Activated naive CD4-positive, alpha-beta T cell treated with anti-CD3 and anti-CD28 coated beads for 36 hours (primary cell): ENCODE measurements at regions of chr17 and their contacts with region 1.

Region 1: GRCh38 chr17:49788478-49789242 is at the start of gene KAT7:
- DNase-seq: peak; percentile 99
- H3K4me3 Mint-ChIP-seq: peak within 1 kb of the TSS; percentile 92
- H3K27ac Mint-ChIP-seq: peak within 1 kb of the TSS; percentile 95
- H3K4me1 Mint-ChIP-seq: peaks cover 51% of the 10 kb centered on the region
- H3K27me3 Mint-ChIP-seq: no peaks in the 10 kb centered on the region
- total RNA-seq, gene KAT7: 83.9 to 85.8 TPM

Region 2: GRCh38 chr17:49414622-49415350 is 373.9 kb before region 1 on chr17 and contains the start of gene PHB1:
- CTCF ChIA-PET with region 1: no interaction called
- intact Hi-C with region 1: loop called (anchors 1 kb)
- DNase-seq: peak; percentile 99
- H3K4me3 Mint-ChIP-seq: peak within 1 kb of the TSS; percentile 100
- H3K27ac Mint-ChIP-seq: peak within 1 kb of the TSS; percentile 78
- H3K4me1 Mint-ChIP-seq: peaks cover 32% of the 10 kb centered on the region
- H3K27me3 Mint-ChIP-seq: no peaks in the 10 kb centered on the region
- total RNA-seq, gene PHB1: 390 to 404 TPM

Region 3: DNA sequence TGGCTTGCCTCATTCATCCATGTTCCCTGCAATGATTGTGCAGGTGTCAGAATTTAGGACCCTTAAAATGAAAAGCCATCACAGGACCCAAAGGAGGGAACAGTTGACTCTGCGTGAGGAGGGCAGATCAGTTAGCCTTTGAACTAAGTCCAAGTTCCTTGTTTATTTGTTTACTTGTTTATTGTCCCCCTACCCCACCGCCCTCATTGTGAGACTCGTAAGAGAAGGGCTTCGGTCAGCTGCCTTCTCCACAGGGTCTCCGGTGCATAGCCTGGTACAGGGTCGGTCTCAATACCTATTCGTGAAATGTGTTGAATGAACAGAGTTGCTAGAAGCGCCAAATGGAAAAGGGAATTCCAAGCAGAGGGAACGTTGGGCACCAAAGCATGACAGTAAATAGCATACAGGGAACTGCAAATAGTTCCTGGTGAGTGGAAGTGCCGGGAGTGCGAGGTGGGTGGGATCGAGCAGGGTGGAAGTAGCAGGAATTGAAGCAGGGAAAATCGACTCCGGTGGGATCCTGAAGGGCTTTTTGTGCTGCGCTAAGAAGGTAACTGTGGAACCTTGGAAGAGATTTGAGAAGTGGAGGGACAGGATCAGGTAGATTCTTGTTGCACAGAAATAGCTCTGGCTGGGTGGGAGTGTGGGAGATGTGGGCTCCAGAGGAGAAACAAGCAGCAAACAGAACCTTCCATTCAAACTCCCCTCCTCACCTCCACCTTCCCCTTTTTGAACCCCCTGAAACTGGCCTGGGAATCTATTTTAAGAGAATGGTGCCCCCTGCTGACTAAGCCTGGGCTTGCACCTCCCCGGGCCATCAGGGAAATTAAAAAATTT is 93.6 kb before region 1 on chr17:
- CTCF ChIA-PET with region 1: no interaction called
- intact Hi-C with region 1: loop called (anchors 1 kb)
- DNase-seq: peak; percentile 87
- H3K4me3 Mint-ChIP-seq: no peak overlapping the region
- H3K27ac Mint-ChIP-seq: peak overlapping the region; percentile 92
- H3K4me1 Mint-ChIP-seq: peaks cover 39% of the 10 kb centered on the region
- H3K27me3 Mint-ChIP-seq: no peaks in the 10 kb centered on the region

Region 4: GRCh38 chr17:49748791-49749190 is 39.9 kb before region 1 on chr17:
- CTCF ChIA-PET with region 1: interaction called, 3 read pairs
- intact Hi-C with region 1: loop called (anchors 2 kb)
- DNase-seq: peak; percentile 86
- H3K4me3 Mint-ChIP-seq: peak overlapping the region; percentile 14
- H3K27ac Mint-ChIP-seq: peak overlapping the region; percentile 91
- H3K4me1 Mint-ChIP-seq: peaks cover 78% of the 10 kb centered on the region
- H3K27me3 Mint-ChIP-seq: no peaks in the 10 kb centered on the region

Region 5: DNA sequence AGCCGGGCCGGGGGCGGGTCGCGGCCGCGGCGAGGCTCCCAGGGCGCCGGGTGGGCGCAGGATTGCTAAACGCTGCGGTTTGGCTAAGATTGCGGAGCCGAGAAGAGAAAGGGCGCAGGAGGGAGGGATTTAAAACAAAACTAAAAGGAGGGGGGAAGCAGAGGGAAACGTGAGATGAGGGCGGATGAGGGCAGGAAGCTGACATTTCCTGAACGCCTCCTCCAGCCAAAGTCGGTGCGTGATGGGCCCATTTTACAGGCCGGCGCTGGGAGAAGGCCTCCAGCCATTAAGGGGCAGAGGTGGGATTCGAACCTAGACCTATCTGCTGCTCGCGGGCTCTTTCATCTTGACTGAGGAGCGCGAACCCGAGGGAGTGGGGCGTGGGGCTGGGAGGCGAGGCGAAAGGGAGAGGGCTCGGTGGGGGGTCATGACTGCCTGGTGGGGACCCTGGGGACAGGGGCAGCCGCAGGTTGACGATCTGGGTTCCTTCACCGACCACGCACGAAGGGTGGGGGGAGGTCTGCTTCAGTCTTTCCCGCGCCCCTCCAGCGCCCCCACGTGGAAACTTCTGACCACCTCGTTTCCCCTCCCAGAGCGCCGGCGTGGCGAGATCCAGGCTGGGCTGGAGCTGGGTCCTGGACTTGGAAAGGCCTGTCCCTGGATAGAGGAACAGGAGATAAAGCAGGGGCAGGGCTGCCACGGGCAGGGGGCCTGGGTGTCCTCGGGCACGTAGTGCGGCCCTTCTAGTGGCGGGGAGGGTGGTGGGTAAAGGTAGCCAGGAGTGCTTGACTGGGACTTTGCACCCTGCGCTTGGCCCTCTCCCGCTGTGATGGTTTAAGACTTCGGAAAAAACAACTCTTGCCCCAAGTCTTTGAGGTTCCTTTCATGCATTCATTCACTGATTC is 63.0 kb after region 1 on chr17:
- CTCF ChIA-PET with region 1: no interaction called
- intact Hi-C with region 1: loop called (anchors 2 kb)
- DNase-seq: peak; percentile 76
- H3K4me3 Mint-ChIP-seq: peak overlapping the region; percentile 78
- H3K27ac Mint-ChIP-seq: peak overlapping the region; percentile 64
- H3K4me1 Mint-ChIP-seq: peaks cover 12% of the 10 kb centered on the region
- H3K27me3 Mint-ChIP-seq: peaks cover 2% of the 10 kb centered on the region